B cell (primary cell): ENCODE measurements at regions of chr7 and their contacts with region 1.

Region 1: DNA sequence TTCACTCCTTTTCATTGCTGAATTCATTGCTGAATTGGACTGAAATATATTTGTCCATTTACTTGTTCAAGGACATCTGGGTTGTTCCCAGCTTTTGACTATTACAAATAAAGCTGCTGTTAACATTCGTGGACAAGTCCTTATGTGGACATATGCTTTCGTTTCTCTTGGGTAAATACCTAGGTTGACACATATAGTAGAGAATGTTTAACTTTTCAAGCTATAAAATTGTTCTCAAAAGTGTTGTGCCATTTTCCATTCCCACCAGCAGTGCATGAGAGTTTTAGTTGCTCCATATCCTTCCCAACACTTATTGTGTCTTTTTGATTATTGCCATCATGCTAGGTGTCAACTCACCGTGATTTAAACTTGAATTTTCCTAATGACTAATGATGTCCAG is 17.5 kb upstream of the CPVL start:
- DNase-seq: no peak
- ATAC-seq: no peak
- H3K4me3 ChIP-seq: no peak overlapping the region
- H3K4me3 Mint-ChIP-seq: no peak overlapping the region
- H3K27ac ChIP-seq: no peak overlapping the region
- H3K27ac Mint-ChIP-seq: no peak overlapping the region
- H3K4me1 ChIP-seq: no peaks in the 10 kb centered on the region
- H3K4me1 Mint-ChIP-seq: no peaks in the 10 kb centered on the region
- H3K27me3 ChIP-seq: peaks cover 0 to 10% (median 8%) of the 10 kb centered on the region in 4 experiments
- H3K27me3 Mint-ChIP-seq: peaks cover 22% of the 10 kb centered on the region
- CTCF ChIP-seq: no peak

Region 2: GRCh38 chr7:29356631-29357030 is 192.8 kb after region 1 on chr7:
- CTCF ChIA-PET with region 1: no interaction called
- POLR2A ChIA-PET with region 1: interaction called, 10 read pairs
- intact Hi-C with region 1: no loop called
- DNase-seq: no peak
- ATAC-seq: no peak
- H3K4me3 ChIP-seq: no peak overlapping the region
- H3K4me3 Mint-ChIP-seq: no peak overlapping the region
- H3K27ac ChIP-seq: no peak overlapping the region
- H3K27ac Mint-ChIP-seq: no peak overlapping the region
- H3K4me1 ChIP-seq: no peaks in the 10 kb centered on the region
- H3K4me1 Mint-ChIP-seq: no peaks in the 10 kb centered on the region
- H3K27me3 ChIP-seq: peaks cover 0 to 2% (median 0%) of the 10 kb centered on the region in 4 experiments
- H3K27me3 Mint-ChIP-seq: peaks cover 4% of the 10 kb centered on the region
- CTCF ChIP-seq: no peak